ENCODE measurements at regions of chr19 and their contacts with region 1.

Region 1: GRCh38 chr19:40444192-40445028 is at the start of gene SERTAD3:
- H3K4me3 Mint-ChIP-seq: peak within 1 kb of the TSS; percentile 97
- H3K27ac Mint-ChIP-seq: peak within 1 kb of the TSS; percentile 98
- H3K4me1 Mint-ChIP-seq: peaks cover 30% of the 10 kb centered on the region
- H3K27me3 Mint-ChIP-seq: no peaks in the 10 kb centered on the region

Region 2: DNA sequence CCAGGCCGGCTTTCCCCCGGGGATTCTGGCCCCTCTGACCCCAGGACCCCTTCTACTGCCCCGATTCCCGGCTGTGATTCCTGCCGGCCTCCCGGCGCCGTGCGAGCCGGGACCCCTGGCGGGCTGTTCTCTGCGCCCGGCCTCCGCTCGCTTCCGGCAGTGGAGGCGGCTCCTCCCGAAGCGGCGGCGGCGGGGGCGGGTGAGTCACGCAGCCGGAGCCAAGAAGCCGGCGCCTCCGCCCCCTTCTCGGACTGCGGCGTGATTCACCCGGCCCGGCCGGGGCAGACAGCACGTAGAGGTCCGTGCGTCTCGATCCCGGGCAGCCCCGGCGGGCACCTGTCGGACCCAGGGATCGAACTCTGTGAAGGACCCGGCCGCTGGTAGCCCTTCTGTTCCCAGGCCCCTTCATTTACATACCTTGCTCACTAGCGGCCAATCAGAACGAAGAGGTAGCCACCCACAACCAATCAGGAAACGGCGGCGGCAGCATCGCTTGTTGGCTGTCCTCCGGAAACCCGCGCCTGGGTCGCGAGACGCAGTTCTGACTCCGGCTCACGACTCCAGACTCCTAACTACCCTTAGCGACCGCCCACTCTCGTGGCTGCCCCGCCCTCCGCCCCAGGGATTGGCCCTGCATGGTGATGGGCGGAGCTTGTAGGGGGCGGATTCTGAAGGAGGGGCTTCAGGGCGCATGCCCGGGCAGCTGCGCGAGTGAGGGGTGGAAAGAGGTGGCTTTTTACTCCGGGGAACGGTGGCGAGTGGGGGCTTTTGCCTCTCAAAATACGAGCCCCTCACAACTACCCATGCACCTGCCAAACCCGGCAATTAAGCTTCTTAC is 18.7 kb before region 1 on chr19 and contains the start of gene SERTAD1:
- intact Hi-C with region 1: loop called (anchors 1 kb)
- H3K4me3 Mint-ChIP-seq: peak within 1 kb of the TSS; percentile 88
- H3K27ac Mint-ChIP-seq: peak within 1 kb of the TSS; percentile 88
- H3K4me1 Mint-ChIP-seq: peaks cover 24% of the 10 kb centered on the region
- H3K27me3 Mint-ChIP-seq: no peaks in the 10 kb centered on the region

Region 3: GRCh38 chr19:40433391-40434216 is 10.8 kb before region 1 on chr19:
- intact Hi-C with region 1: loop called (anchors 1 kb)
- H3K4me3 Mint-ChIP-seq: peak overlapping the region; percentile 72
- H3K27ac Mint-ChIP-seq: peak overlapping the region; percentile 97
- H3K4me1 Mint-ChIP-seq: peaks cover 43% of the 10 kb centered on the region
- H3K27me3 Mint-ChIP-seq: no peaks in the 10 kb centered on the region